ENCODE measurements at regions of chr17 and their contacts with region 1.

Region 1: GRCh38 chr17:3668279-3669085 is at the starts of genes EMC6 and TAX1BP3:
- DNase-seq: peak; percentile 99
- H3K4me3 ChIP-seq: peak within 1 kb of the TSS; percentile 92 to 98
- H3K27ac ChIP-seq: peak within 1 kb of the TSS; percentile 86 to 89
- H3K4me1 ChIP-seq: peaks cover 6 to 32% (median 28%) of the 10 kb centered on the region in 4 donors
- H3K27me3 ChIP-seq: no peaks in the 10 kb centered on the region
- CTCF ChIP-seq: no peak

Region 2: GRCh38 chr17:2711601-2712299 is 956.7 kb before region 1 on chr17 and contains the start of gene CLUH:
- intact Hi-C with region 1: loop called (anchors 10 kb)
- DNase-seq: peak; percentile 94 to 99
- H3K4me3 ChIP-seq: peak within 1 kb of the TSS; percentile 81 to 94
- H3K27ac ChIP-seq: peak within 1 kb of the TSS; percentile 77 to 78
- H3K4me1 ChIP-seq: peaks cover 5 to 54% (median 50%) of the 10 kb centered on the region in 4 donors
- H3K27me3 ChIP-seq: no peaks in the 10 kb centered on the region
- CTCF ChIP-seq: no peak

Region 3: DNA sequence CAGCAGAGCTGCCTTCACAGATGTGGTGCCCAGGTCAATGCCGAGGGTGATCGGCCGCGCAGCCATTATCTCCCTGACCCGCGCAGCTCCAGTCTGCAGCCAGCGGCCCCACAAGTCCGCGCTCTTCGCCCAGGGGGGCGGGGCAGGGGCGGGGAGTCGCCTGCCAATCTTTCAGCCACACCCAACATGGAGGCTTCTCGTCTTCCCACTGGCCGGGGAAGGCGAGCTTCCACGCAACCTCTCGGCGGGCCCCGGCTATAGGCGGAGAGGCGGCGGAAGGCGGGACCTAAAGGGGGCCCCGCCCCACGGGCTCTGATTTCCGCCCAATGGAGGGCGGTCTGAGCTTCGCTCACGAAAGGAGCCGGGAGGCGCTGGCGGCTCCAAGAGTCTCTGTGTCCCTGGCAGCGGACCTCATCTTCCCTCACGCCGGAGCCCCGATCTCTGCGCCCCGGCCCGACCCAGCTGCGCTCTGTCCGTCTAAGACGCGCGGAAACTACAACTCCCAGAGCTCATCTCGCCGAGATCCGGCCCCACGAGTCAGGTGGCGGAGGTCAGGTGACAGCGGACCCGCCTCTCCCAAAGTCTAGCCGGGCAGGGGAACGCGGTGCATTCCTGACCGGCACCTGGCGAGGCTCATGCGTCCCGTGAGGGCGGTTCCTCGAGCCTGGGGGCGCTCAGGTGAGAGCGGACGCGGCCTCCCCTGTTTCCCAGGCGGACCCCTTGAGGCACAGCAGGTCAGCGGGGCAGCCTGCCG is 32.2 kb before region 1 on chr17 and contains the starts of genes CTNS and SHPK:
- intact Hi-C with region 1: loop called (anchors 1 kb)
- DNase-seq: peak; percentile 97 to 98
- H3K4me3 ChIP-seq: peak within 1 kb of the TSS; percentile 92 to 94
- H3K27ac ChIP-seq: peak within 1 kb of the TSS; percentile 93 to 98
- H3K4me1 ChIP-seq: peaks cover 0 to 35% (median 22%) of the 10 kb centered on the region in 4 donors
- H3K27me3 ChIP-seq: no peaks in the 10 kb centered on the region
- CTCF ChIP-seq: peak in 1 of 2 experiments; percentile 7

Region 4: GRCh38 chr17:3802461-3803307 is 134.2 kb after region 1 on chr17:
- intact Hi-C with region 1: no loop called
- DNase-seq: peak in 1 of 2 donors; percentile 39
- H3K4me3 ChIP-seq: no peak overlapping the region
- H3K27ac ChIP-seq: no peak overlapping the region
- H3K4me1 ChIP-seq: no peaks in the 10 kb centered on the region
- H3K27me3 ChIP-seq: peaks cover 0 to 9% of the 10 kb centered on the region in 2 donors
- CTCF ChIP-seq: no peak

Measured in tibial artery (tissue), 4 donors.